ENCODE measurements at regions of chr22 and their contacts with region 1.

Region 1: DNA sequence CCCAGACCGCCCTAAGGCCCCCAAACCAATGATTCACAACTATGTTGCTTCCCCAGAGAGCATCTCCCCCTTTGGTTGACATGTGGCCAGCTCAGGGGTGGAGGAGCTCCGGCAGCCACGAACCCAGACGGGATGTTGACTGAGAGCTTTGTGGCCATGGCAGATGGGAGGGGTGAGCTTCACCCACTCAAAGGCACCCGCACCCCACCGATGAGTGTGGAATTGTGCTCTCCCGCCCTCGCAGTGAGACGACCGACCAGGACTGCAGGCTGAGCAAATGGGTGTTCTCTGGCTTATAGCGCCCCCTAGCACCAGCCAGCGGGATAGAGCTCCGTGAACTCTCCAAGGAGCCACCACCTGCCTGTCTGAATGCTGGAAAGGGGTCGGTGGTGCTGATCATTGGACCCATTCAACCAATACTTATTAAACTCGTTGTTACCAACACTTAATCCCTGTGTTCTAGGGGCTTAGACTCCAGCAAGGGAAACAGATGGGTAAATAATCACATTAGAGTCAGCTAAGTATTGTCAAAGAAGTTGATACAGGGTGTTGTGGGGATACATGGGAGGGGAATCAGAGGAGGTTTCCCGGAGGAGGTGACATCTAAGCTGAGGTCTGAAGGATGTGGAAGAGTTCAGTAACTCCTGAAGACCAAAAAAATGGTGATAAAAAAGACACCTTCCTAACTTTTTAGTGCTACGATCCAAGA is 4.5 kb upstream of the TIMP3 start:
- DNase-seq: peak; percentile 77
- CTCF ChIP-seq: peak; percentile 70

Region 2: GRCh38 chr22:32528984-32529982 is 267.7 kb before region 1 on chr22:
- in situ Hi-C with region 1: loop called (anchors 10 kb)
- DNase-seq: peak; percentile 88
- CTCF ChIP-seq: peak; percentile 72

Region 3: DNA sequence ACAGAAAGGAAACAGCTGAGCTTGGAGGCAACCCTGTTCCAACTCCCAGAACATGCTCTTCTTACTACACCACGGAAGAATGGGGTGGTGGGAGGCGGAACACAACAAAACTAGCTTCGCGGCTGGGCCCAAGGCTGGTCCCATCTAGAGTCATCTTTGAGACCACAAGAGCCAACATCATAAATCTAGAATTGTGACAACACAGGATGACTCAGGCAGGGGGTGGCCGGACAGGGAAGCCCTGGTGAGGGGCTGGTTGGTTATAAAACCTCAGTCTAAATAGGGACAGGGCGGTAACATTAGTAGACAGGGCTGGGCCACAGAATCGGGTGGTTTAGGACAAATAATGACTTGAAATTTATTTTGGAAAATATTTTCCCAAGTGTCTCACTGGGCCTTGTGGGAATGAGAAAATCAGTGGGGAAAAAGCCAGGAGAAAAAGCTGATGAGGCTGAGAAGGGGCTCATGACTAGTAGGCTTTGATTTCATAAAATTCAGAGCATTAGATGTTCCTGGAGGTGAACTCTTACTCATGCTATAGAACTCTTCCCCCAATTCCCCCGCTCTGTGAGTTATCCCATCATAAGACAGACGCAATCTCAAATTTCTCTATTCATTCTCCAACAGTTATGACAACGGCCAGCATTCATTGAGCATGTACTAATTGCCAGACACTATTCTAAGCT is 147.4 kb before region 1 on chr22:
- in situ Hi-C with region 1: loop called (anchors 10 kb)
- DNase-seq: no peak
- CTCF ChIP-seq: no peak

Region 4: GRCh38 chr22:33372875-33373274 is 575.9 kb after region 1 on chr22:
- in situ Hi-C with region 1: no loop called
- DNase-seq: no peak
- CTCF ChIP-seq: no peak

Measured in GM13976 (cell line).